PC-9 (cell line): ENCODE measurements at regions of chr5 and their contacts with region 1.

Region 1: GRCh38 chr5:137498736-137499505 is at the start of gene SPOCK1:
- DNase-seq: peak; percentile 46 to 81
- H3K4me3 ChIP-seq: peak within 1 kb of the TSS; percentile 48; the same call in 1 of the 2 replicates
- H3K27ac ChIP-seq: no peak within 1 kb of the TSS
- H3K4me1 ChIP-seq: no peaks in the 10 kb centered on the region
- H3K27me3 ChIP-seq: no peaks in the 10 kb centered on the region
- CTCF ChIP-seq: peak; percentile 47; the same call in 1 of the 2 replicates
- total RNA-seq, gene SPOCK1: 23.9 and 31.8 TPM in 2 replicates

Region 2: GRCh38 chr5:137348759-137349158 is 150.2 kb before region 1 on chr5:
- CTCF ChIA-PET with region 1: no interaction called
- POLR2A ChIA-PET with region 1: no interaction called
- intact Hi-C with region 1: no loop called
- DNase-seq: no peak
- H3K4me3 ChIP-seq: no peak overlapping the region
- H3K27ac ChIP-seq: no peak overlapping the region
- H3K4me1 ChIP-seq: peaks cover 3% of the 10 kb centered on the region
- H3K27me3 ChIP-seq: no peaks in the 10 kb centered on the region
- CTCF ChIP-seq: no peak

Region 3: DNA sequence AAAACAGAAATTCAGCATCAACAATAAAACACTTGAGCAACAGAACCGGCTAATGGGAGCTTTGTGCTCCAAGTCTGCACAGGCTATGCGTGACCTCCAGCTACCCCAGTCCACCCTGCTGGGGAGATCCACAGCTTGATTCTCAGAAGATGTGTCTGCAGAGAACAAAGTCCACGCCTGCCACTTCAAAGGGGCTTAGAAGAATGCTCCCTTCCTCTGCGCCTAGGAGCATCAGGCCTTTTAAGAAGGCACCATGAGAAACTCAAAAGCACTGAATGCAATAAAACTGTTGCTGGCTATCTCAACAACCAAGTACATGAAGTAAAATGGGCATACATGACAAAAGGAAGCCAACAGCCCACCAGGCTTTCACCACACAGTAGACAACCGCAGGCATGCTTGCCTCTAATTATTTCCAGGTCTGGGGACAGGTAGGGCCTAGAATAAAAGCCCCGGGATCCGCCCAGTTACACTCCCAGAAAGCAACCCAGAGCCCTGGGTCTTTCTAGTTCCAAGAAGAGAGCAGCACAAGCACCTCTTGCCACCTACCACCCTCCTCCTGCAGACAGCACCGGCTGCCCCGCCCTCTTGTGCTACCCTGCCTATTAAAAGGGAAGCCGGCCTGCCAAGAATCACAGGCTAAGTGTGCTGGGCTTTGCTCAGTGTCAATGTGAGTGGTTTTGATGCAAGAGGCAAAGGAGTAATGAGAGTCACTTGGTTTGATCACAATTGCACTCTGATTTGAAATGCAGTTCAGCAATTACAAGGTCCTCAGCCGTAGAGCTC is 123.0 kb before region 1 on chr5:
- CTCF ChIA-PET with region 1: no interaction called
- POLR2A ChIA-PET with region 1: no interaction called
- intact Hi-C with region 1: loop called (anchors 5 kb)
- DNase-seq: no peak
- H3K4me3 ChIP-seq: no peak overlapping the region
- H3K27ac ChIP-seq: no peak overlapping the region
- H3K4me1 ChIP-seq: peaks cover 14% of the 10 kb centered on the region
- H3K27me3 ChIP-seq: no peaks in the 10 kb centered on the region
- CTCF ChIP-seq: no peak

Region 4: GRCh38 chr5:137415231-137415681 is 83.7 kb before region 1 on chr5:
- CTCF ChIA-PET with region 1: no interaction called
- POLR2A ChIA-PET with region 1: no interaction called
- intact Hi-C with region 1: no loop called
- DNase-seq: peak in 1 of 2 experiments; percentile 14
- H3K4me3 ChIP-seq: no peak overlapping the region
- H3K27ac ChIP-seq: no peak overlapping the region
- H3K4me1 ChIP-seq: no peaks in the 10 kb centered on the region
- H3K27me3 ChIP-seq: no peaks in the 10 kb centered on the region
- CTCF ChIP-seq: no peak

Region 5: GRCh38 chr5:137487600-137487999 is 11.3 kb before region 1 on chr5:
- CTCF ChIA-PET with region 1: no interaction called
- POLR2A ChIA-PET with region 1: no interaction called
- intact Hi-C with region 1: no loop called
- DNase-seq: no peak
- H3K4me3 ChIP-seq: no peak overlapping the region
- H3K27ac ChIP-seq: no peak overlapping the region
- H3K4me1 ChIP-seq: no peaks in the 10 kb centered on the region
- H3K27me3 ChIP-seq: no peaks in the 10 kb centered on the region
- CTCF ChIP-seq: no peak

Region 6: DNA sequence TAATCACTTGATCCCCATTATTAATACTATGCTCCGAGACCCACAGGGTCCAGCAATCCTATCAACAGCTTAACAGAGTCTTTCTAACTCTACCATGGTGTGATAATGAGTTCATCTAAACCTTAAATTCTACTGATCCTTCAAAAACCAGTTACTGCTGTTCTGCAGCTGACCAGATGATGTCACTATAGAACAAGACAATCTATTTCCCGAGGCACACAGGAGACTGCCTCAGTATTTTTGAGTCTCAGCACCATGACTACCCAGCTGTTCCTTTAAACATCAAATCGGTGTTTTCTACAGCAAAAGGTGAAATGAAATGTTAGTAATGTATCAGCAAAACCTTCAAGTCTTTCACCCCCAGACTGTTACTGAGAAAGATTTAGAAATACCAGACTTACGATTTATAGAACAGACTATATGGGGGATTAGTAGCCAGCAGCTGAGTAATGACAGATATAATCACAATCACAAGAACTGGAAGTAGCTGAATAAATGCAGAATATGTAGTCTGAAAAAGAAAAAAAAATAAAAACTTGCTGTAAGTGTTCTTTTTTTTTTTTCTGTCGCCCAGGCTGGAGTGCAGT is 1923.5 kb after region 1 on chr5:
- CTCF ChIA-PET with region 1: no interaction called
- POLR2A ChIA-PET with region 1: no interaction called
- intact Hi-C with region 1: no loop called
- DNase-seq: peak; percentile 33 to 55
- H3K4me3 ChIP-seq: no peak overlapping the region
- H3K27ac ChIP-seq: no peak overlapping the region
- H3K4me1 ChIP-seq: no peaks in the 10 kb centered on the region
- H3K27me3 ChIP-seq: no peaks in the 10 kb centered on the region
- CTCF ChIP-seq: peak; percentile 83